Gastrocnemius medialis (tissue), 4 donors: ENCODE measurements at regions of chr10 and their contacts with region 1.

Region 1: DNA sequence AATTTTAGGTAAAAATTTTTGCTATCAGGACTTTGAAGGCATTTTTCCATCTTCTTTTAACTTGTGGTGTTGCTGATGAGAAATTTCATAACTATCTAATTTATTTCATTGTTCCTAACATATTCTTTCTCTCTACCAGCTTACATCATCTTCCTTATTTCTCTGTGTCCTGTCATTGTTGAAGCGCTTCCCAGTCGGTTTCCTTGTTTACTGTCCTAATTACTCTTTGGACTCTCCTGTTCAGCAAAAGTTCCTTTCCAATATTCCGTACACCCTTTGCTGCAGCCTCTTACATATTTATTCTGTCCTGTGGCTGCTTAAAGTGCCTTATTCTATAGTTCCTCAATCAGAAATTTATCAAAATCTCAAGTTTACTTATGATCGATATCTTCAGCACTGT is 609.0 kb upstream of the FZD8 start:
- DNase-seq: no peak
- ATAC-seq: no peak
- H3K4me3 ChIP-seq: no peak overlapping the region
- H3K27ac ChIP-seq: no peak overlapping the region
- H3K4me1 ChIP-seq: peaks cover 0 to 4% of the 10 kb centered on the region in 2 donors
- H3K27me3 ChIP-seq: no peaks in the 10 kb centered on the region
- CTCF ChIP-seq: no peak
- POLR2A ChIP-seq: no peak

Region 2: GRCh38 chr10:36177071-36177470 is 74.0 kb before region 1 on chr10:
- in situ Hi-C with region 1: no loop called
- intact Hi-C with region 1: loop called (anchors 2 kb)
- DNase-seq: no peak
- ATAC-seq: no peak
- H3K4me3 ChIP-seq: no peak overlapping the region
- H3K27ac ChIP-seq: no peak overlapping the region
- H3K4me1 ChIP-seq: peaks cover 3 to 7% of the 10 kb centered on the region in 2 donors
- H3K27me3 ChIP-seq: no peaks in the 10 kb centered on the region
- CTCF ChIP-seq: no peak
- POLR2A ChIP-seq: no peak